Motor neuron (in vitro differentiated cells): ENCODE measurements at regions of chr3 and their contacts with region 1.

Region 1: GRCh38 chr3:173553635-173554280 is 156.2 kb downstream of the NLGN1 start:
- ATAC-seq: peak in 3 of 8 experiments; percentile 51 to 63 (median 52)
- H3K4me3 ChIP-seq: no peak overlapping the region
- H3K27ac ChIP-seq: no peak overlapping the region
- H3K4me1 ChIP-seq: no peaks in the 10 kb centered on the region

Region 2: GRCh38 chr3:173009410-173009809 is 544.3 kb before region 1 on chr3:
- in situ Hi-C with region 1: no loop called
- ATAC-seq: no peak
- H3K4me3 ChIP-seq: no peak overlapping the region
- H3K27ac ChIP-seq: no peak overlapping the region
- H3K4me1 ChIP-seq: peaks cover 0 to 4% of the 10 kb centered on the region in 2 donors

Region 3: DNA sequence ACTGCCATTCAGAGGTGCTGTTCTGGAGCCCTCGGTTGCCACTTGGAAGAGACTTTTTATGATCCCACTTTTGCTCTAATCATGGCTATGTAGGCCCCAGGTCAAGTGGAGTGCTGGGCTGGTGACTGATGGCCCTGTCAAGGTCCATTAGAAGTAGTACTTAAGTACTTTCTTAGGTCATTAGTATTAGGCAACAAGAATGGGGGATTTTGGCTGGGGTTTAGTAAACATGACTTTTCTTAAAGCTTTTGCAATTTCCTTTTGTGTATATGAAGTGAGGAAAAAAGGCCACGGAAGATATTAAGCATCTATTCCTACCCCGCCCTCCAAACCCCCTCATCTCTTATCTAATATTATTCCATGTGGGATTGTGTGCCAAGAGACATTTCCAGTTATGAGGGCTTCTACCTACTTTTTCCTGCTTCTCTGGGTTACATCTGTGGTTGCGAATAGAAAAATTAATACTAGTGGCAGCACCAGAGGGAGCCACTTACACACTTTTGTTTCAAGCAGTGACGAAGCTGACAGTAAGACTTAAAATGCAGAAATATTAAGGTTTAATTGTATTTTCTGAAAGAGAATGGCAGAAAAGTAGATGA is 142.3 kb before region 1 on chr3:
- in situ Hi-C with region 1: loop called in 3 of 9 experiments (anchors 25 kb)
- ATAC-seq: peak; percentile 23 to 71 (median 56)
- H3K4me3 ChIP-seq: no peak overlapping the region
- H3K27ac ChIP-seq: no peak overlapping the region
- H3K4me1 ChIP-seq: peaks cover 12 to 22% of the 10 kb centered on the region in 2 donors

Region 4: DNA sequence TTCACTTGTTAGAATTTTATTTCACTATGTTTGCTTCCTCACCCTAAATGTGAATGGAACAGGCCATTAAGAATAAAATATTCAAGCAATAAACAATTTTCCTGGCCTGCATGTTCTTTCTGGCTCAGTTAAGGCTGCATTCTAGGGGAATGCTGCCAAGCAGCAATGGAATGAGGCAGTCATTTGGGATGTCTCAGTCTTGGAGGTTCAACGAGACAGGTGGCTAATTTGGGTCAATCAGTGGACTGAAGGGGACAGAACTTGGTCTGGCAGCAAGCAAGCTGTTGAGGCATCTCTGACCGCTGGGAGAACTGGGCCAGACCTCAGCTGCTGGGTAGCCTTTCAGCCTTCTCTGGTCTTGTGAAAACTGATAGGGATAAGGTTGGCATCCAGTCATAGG is 85.3 kb after region 1 on chr3:
- in situ Hi-C with region 1: no loop called
- ATAC-seq: peak in 1 of 8 experiments; percentile 45
- H3K4me3 ChIP-seq: no peak overlapping the region
- H3K27ac ChIP-seq: no peak overlapping the region
- H3K4me1 ChIP-seq: no peaks in the 10 kb centered on the region